ENCODE measurements at regions of chr4 and their contacts with region 1.

Region 1: DNA sequence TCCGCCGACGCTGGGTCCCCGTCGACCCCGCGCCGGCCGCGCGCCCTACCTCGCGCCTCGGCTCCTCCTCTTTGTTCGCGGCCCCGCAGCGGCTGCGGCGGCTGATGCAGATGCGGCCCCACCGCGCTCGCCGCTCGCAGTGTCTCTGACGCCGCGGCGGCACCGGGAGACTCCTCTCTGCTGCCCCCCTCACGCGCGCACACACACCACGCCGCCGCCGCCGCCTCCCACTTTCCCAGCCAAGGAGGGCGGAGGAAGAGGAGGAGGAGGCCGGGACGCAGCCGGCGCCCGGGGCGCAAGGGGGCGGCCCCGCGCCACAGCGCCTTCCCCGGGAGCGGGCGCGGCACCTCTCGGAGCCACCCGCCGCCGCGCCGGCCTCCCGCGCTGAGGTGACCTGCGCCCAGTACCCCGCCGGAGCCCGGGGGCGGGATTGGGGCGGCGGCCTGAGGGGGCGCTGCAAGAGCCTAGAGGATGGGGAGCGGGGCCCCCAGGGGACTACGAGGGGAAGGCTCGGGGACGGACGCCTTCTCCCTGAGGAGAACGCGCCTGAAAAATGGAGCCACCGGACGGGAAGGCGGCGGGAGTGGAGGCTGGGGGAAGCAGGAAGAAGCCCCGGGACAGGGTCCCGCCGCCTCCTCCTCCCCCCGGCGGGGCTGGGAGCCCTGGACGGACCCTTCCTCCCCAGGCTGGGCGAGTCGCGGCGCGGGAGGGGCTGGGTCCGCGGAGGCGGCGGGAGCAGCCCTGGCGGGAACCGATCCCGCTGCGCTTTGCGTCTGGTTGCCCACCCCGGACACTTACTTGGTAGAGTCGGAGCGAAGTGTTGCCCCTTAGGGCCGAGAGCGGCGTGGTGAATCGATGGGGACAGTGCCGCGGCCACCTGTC is at the start of gene SH3RF1:
- DNase-seq: no peak
- ATAC-seq: peak; percentile 79
- H3K4me3 ChIP-seq: peak within 1 kb of the TSS; percentile 80
- H3K27ac ChIP-seq: peak within 1 kb of the TSS; percentile 75
- H3K4me1 ChIP-seq: peaks cover 14% of the 10 kb centered on the region
- H3K27me3 ChIP-seq: no peaks in the 10 kb centered on the region
- CTCF ChIP-seq: peak; percentile 24 to 38 (median 25); a peak in 5 of 6 replicates
- EP300 ChIP-seq: no peak; a peak in 1 of 4 replicates
- POLR2A ChIP-seq: peak; percentile 85
- RAD21 ChIP-seq: peak; percentile 44
- polyA plus RNA-seq, gene SH3RF1: 4.5 to 10.7 TPM

Region 2: GRCh38 chr4:169024762-169025161 is 246.3 kb before region 1 on chr4:
- CTCF ChIA-PET with region 1: no interaction called
- POLR2A ChIA-PET with region 1: no interaction called
- RAD21 ChIA-PET with region 1: interaction called, 10 read pairs
- SMC1A ChIA-PET with region 1: interaction called, 14 read pairs
- in situ Hi-C with region 1: no loop called
- intact Hi-C with region 1: loop called (anchors 2 kb)
- DNase-seq: no peak
- ATAC-seq: peak; percentile 97
- H3K4me3 ChIP-seq: no peak overlapping the region
- H3K27ac ChIP-seq: no peak overlapping the region
- H3K4me1 ChIP-seq: no peaks in the 10 kb centered on the region
- H3K27me3 ChIP-seq: no peaks in the 10 kb centered on the region
- CTCF ChIP-seq: peak; percentile 63 to 77 (median 65)
- EP300 ChIP-seq: no peak
- POLR2A ChIP-seq: no peak
- RAD21 ChIP-seq: peak; percentile 94

Region 3: DNA sequence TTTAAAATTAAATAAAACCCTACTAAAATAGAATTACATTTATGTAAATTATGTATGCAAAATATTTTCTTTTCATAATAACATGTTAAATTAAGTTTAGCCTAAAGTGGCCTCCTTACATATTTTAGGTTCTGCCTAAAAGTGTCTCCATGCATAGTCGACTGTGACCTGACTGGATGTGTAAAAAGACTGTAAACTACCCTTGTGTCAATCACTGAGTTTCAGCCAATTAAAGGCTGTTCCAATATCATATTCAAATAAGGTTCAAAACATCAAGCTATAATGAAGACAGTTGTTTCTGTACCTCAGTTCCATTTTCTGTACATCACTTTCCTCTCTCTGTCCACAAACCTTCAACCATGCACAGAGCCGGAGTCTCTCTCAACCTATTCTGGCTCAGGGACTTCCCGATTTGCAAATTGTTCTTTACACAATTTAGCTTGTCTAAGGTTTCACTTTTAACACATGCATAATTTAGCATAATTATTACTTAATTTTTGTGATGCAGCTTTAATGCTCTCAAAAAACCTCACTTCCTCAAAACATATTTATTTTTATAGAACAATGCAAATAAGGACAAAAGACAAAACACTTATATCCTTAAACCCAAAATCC is 60.4 kb before region 1 on chr4:
- CTCF ChIA-PET with region 1: interaction called, 4 read pairs
- POLR2A ChIA-PET with region 1: interaction called, 3 read pairs
- RAD21 ChIA-PET with region 1: interaction called, 11 read pairs
- SMC1A ChIA-PET with region 1: interaction called, 22 read pairs
- in situ Hi-C with region 1: no loop called
- intact Hi-C with region 1: loop called (anchors 2 kb)
- DNase-seq: peak; percentile 78
- ATAC-seq: peak; percentile 96
- H3K4me3 ChIP-seq: peak overlapping the region; percentile 29; the same call in 1 of the 2 replicates
- H3K27ac ChIP-seq: peak overlapping the region; percentile 72
- H3K4me1 ChIP-seq: peaks cover 16% of the 10 kb centered on the region
- H3K27me3 ChIP-seq: no peaks in the 10 kb centered on the region
- CTCF ChIP-seq: no peak
- EP300 ChIP-seq: peak in 1 of 2 experiments; percentile 37; a peak in 1 of 4 replicates
- POLR2A ChIP-seq: no peak
- RAD21 ChIP-seq: no peak

Region 4: DNA sequence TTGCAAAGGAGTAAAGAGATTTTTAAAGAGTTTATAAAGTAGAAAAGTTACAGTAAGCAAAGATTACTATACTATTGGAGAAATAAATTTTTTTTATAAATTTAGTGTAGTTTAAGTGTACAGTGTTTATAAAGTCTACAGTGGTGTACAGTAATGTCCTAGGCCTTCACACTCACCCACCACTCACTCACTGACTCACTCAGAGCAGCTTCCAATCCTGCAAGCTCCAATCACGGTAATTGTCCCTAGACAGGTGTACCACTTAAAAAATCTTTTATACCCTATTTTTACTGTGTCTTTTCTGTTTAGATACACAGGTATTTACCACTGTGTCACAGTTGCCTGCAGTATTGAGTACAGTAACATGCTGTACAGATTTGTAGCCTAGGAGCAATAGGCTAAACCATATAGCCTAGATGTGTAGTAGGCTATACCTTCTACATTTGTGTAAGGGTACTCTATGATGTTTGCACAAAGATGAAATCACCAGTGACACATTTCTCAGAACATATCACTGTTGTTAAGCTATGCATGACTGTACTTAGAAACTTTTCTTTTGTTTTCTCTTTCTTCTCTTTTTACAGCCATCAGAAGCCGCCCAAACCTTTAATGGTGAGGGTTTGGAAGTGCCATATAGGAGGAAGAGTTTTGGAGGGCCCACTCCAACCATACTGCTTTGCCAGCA is 11.5 kb after region 1 on chr4:
- CTCF ChIA-PET with region 1: interaction called, 5 read pairs
- POLR2A ChIA-PET with region 1: interaction called, 3 read pairs
- RAD21 ChIA-PET with region 1: interaction called, 5 read pairs
- SMC1A ChIA-PET with region 1: interaction called, 11 read pairs
- in situ Hi-C with region 1: no loop called
- intact Hi-C with region 1: no loop called
- DNase-seq: no peak
- ATAC-seq: peak; percentile 48; the same call in 2 of the 3 replicates
- H3K4me3 ChIP-seq: no peak overlapping the region
- H3K27ac ChIP-seq: no peak overlapping the region
- H3K4me1 ChIP-seq: no peaks in the 10 kb centered on the region
- H3K27me3 ChIP-seq: no peaks in the 10 kb centered on the region
- CTCF ChIP-seq: no peak
- EP300 ChIP-seq: no peak
- POLR2A ChIP-seq: no peak
- RAD21 ChIP-seq: no peak

Region 5: DNA sequence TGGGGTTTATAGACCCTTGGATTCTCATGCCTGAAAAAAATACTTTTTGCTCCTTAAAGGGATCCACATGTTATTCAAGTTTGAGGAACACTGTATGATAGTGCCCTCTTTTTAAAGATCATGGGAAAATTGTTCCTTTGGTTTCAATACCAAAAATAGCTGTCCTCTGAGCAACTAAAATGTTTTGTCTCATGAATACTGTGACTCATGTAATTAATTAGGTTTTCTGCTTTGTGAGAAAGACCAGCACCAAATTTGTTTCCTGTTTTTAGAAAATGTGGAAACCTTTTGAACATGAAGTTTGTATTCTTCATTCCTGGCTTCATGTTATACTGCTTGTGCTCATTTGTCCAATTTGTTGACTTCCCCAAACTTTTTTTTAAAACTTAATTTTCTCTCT is 127.3 kb after region 1 on chr4:
- CTCF ChIA-PET with region 1: interaction called, 3 read pairs
- POLR2A ChIA-PET with region 1: no interaction called
- RAD21 ChIA-PET with region 1: interaction called, 12 read pairs
- SMC1A ChIA-PET with region 1: interaction called, 3 read pairs
- in situ Hi-C with region 1: no loop called
- intact Hi-C with region 1: no loop called
- DNase-seq: no peak
- ATAC-seq: peak; percentile 5; the same call in 2 of the 3 replicates
- H3K4me3 ChIP-seq: no peak overlapping the region
- H3K27ac ChIP-seq: no peak overlapping the region
- H3K4me1 ChIP-seq: peaks cover 13% of the 10 kb centered on the region
- H3K27me3 ChIP-seq: no peaks in the 10 kb centered on the region
- CTCF ChIP-seq: no peak
- EP300 ChIP-seq: no peak
- POLR2A ChIP-seq: no peak
- RAD21 ChIP-seq: no peak

Region 6: DNA sequence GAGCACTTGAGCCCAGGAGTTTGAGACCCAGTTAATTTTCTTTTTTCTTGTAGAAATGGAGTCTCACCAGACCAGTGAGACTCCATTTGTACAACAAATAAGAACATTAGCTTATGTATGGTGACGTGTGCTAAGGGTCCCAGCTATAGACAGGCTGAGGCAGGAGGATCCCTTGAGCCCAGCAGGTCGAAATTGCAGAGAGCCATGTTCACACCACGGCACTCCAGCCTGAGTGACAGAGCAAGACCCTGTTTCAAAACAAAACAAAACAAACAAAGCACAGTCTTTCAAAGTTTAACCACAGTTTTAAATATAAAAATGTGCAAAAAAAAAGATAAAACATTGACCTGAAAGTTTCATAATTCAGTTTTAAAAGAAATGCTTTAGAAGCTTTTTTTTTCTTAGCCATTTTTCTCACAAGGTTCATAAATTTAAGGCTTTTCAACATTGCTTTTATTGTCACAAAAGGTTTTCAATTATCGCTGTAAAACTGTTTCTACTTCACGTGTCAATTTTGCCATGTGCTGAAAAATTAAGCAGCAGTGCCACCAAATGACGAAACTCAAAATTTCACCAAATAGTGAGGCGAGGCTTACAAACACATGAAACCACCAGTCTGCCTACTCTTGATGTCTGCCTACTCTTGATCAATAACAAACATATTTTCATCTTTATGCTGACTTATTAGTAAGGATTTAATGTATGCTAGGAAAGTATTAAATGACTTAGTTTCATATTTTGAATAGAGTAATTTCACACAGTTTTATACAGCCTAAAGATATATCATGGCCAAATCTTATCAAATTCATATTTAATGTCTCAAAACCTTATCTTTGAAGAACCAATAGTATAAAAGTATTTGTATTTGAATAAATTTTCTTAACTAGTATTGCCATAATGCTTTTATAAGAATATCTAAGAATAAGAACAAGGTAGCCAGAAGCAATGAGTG is 215.0 kb after region 1 on chr4:
- CTCF ChIA-PET with region 1: interaction called, 28 read pairs
- POLR2A ChIA-PET with region 1: no interaction called
- RAD21 ChIA-PET with region 1: interaction called, 15 read pairs
- SMC1A ChIA-PET with region 1: interaction called, 27 read pairs
- in situ Hi-C with region 1: no loop called
- intact Hi-C with region 1: loop called (anchors 2 kb)
- DNase-seq: peak; percentile 68
- ATAC-seq: peak; percentile 68
- H3K4me3 ChIP-seq: no peak overlapping the region
- H3K27ac ChIP-seq: no peak overlapping the region
- H3K4me1 ChIP-seq: 0 out of 2 replicates have a peak, but pooled peaks cover 5% of the 10 kb centered on the region
- H3K27me3 ChIP-seq: no peaks in the 10 kb centered on the region
- CTCF ChIP-seq: peak; percentile 43 to 82 (median 67); a peak in 5 of 6 replicates
- EP300 ChIP-seq: no peak
- POLR2A ChIP-seq: no peak
- RAD21 ChIP-seq: peak; percentile 97